SK-N-SH (cell line): ENCODE measurements at regions of chr6 and their contacts with region 1.

Region 1: GRCh38 chr6:143337201-143337949 is 113.1 kb downstream of the ADAT2 start:
- DNase-seq: peak; percentile 48
- H3K4me3 ChIP-seq: no peak overlapping the region; a peak in 1 of 4 replicates
- H3K27ac ChIP-seq: peak overlapping the region in 1 of 2 experiments; percentile 79; a peak in 2 of 4 replicates
- H3K4me1 ChIP-seq: no peaks in the 10 kb centered on the region
- H3K27me3 ChIP-seq: no peaks in the 10 kb centered on the region
- CTCF ChIP-seq: peak; percentile 54
- EP300 ChIP-seq: no peak
- RAD21 ChIP-seq: peak; percentile 55

Region 2: GRCh38 chr6:142692942-142693341 is 644.4 kb before region 1 on chr6:
- CTCF ChIA-PET with region 1: interaction called, 12 read pairs
- POLR2A ChIA-PET with region 1: no interaction called
- DNase-seq: peak; percentile 61
- H3K4me3 ChIP-seq: no peak overlapping the region; a peak in 1 of 4 replicates
- H3K27ac ChIP-seq: peak overlapping the region; percentile 53 to 60; a peak in 3 of 4 replicates
- H3K4me1 ChIP-seq: peaks cover 0 to 22% of the 10 kb centered on the region in 2 experiments; a peak in 2 of 4 replicates
- H3K27me3 ChIP-seq: no peaks in the 10 kb centered on the region
- CTCF ChIP-seq: peak; percentile 89
- EP300 ChIP-seq: no peak
- RAD21 ChIP-seq: peak; percentile 98

Region 3: DNA sequence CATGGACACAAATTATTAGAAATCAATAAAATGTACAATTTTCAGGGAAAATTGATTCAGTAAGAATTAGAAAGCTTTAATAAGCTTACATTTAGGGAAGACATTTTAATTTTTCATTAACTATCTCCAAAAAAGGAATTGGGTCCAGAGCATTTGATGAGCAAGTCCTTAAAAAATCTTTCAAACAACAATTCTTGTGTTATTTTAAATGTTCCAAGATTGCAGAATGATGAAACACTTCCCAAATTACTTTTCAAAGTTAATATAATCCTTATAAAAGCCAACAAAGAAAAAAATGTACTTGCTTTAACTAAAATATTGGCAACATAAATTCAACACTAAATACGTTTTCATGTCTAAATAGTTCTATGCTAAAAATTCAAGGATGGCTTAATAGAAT is 11.2 kb after region 1 on chr6:
- CTCF ChIA-PET with region 1: interaction called, 10 read pairs
- POLR2A ChIA-PET with region 1: no interaction called
- DNase-seq: no peak
- H3K4me3 ChIP-seq: no peak overlapping the region
- H3K27ac ChIP-seq: no peak overlapping the region
- H3K4me1 ChIP-seq: peaks cover 0 to 3% of the 10 kb centered on the region in 2 experiments; a peak in 1 of 4 replicates
- H3K27me3 ChIP-seq: no peaks in the 10 kb centered on the region
- CTCF ChIP-seq: no peak
- EP300 ChIP-seq: no peak
- RAD21 ChIP-seq: no peak